Aorta (tissue), 5 donors: ENCODE measurements at regions of chr2 and their contacts with region 1.

Region 1: GRCh38 chr2:36362291-36362690 is 6.7 kb downstream of the CRIM1 start:
- DNase-seq: no peak
- ATAC-seq: no peak
- H3K4me3 ChIP-seq: no peak overlapping the region
- H3K27ac ChIP-seq: peak overlapping the region; percentile 22 to 52
- H3K4me1 ChIP-seq: peaks cover 6 to 19% of the 10 kb centered on the region in 2 donors
- H3K27me3 ChIP-seq: no peaks in the 10 kb centered on the region

Region 2: GRCh38 chr2:36163520-36164239 is 198.6 kb before region 1 on chr2:
- intact Hi-C with region 1: no loop called
- DNase-seq: no peak
- ATAC-seq: no peak
- H3K4me3 ChIP-seq: no peak overlapping the region
- H3K27ac ChIP-seq: no peak overlapping the region
- H3K4me1 ChIP-seq: no peaks in the 10 kb centered on the region
- H3K27me3 ChIP-seq: no peaks in the 10 kb centered on the region

Region 3: DNA sequence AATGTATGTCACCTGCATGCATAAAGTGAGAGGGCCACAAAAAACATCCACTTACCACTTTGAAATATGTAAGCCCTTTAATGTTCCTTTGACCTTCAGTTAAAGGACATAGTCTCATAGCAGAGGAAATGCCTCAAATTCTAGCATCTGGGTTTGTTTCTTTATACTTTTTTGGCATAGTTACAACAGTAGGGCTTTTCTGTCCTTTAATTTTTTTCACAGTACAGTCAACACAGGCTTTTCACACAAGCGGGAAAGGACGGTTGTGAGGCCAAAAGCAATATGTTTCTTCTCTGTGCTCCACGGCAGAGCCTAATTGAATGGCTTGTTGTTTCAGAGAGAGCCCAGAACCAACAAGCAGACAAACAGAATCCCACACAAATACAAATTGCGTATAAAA is 50.9 kb after region 1 on chr2:
- intact Hi-C with region 1: loop called in 1 of 2 experiments (anchors 5 kb)
- DNase-seq: no peak
- ATAC-seq: peak; percentile 56
- H3K4me3 ChIP-seq: no peak overlapping the region
- H3K27ac ChIP-seq: peak overlapping the region in 1 of 2 donors; percentile 43
- H3K4me1 ChIP-seq: peaks cover 13 to 28% of the 10 kb centered on the region in 2 donors
- H3K27me3 ChIP-seq: no peaks in the 10 kb centered on the region

Region 4: DNA sequence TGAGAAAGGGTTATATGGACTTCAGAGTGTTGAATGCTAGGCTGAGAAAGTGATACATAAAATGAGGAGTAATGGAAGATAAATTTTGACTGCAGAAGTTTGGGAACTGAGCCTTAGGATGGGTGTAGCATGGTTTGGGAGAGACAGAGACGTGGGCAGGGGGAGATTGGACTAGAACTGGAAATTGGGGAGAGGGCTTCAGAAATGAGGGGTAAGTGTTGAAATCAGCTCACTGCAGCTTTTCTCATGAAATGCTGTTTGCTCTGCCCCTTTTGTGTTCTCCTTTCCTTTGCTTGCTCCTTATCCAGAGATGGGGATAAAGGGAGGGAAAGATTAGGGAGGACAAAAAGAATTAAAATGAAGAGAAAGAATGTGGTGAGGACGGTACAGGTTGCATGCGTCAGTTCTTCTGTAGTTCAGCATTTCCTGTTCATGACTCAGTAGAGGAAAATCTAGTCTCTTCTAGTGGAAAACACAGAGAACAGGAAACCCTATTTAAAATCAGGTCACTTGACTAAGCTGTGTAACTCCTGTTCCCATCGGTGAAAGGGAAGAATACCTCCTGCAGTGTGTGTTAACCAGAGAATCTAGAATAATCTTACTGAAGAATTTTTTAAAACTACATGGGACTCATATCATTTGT is 98.9 kb after region 1 on chr2:
- intact Hi-C with region 1: loop called (anchors 5 kb)
- DNase-seq: no peak
- ATAC-seq: no peak
- H3K4me3 ChIP-seq: no peak overlapping the region
- H3K27ac ChIP-seq: peak overlapping the region; percentile 70 to 89
- H3K4me1 ChIP-seq: peaks cover 7 to 10% of the 10 kb centered on the region in 2 donors
- H3K27me3 ChIP-seq: no peaks in the 10 kb centered on the region